ENCODE measurements at regions of chr14 and their contacts with region 1.

Region 1: GRCh38 chr14:63388763-63389431 is 70.2 kb upstream of the GPHB5 start:
- DNase-seq: peak; percentile 88
- H3K4me3 Mint-ChIP-seq: no peak overlapping the region
- H3K27ac Mint-ChIP-seq: no peak overlapping the region
- H3K4me1 Mint-ChIP-seq: peaks cover 7% of the 10 kb centered on the region
- H3K27me3 Mint-ChIP-seq: no peaks in the 10 kb centered on the region

Region 2: GRCh38 chr14:63342371-63342770 is 46.5 kb before region 1 on chr14:
- intact Hi-C with region 1: no loop called
- DNase-seq: no peak
- H3K4me3 Mint-ChIP-seq: no peak overlapping the region
- H3K27ac Mint-ChIP-seq: no peak overlapping the region
- H3K4me1 Mint-ChIP-seq: no peaks in the 10 kb centered on the region
- H3K27me3 Mint-ChIP-seq: peaks cover 35% of the 10 kb centered on the region

Region 3: GRCh38 chr14:63632932-63633514 is 244.1 kb after region 1 on chr14:
- intact Hi-C with region 1: loop called (anchors 2 kb)
- DNase-seq: peak; percentile 62
- H3K4me3 Mint-ChIP-seq: no peak overlapping the region
- H3K27ac Mint-ChIP-seq: no peak overlapping the region
- H3K4me1 Mint-ChIP-seq: peaks cover 18% of the 10 kb centered on the region
- H3K27me3 Mint-ChIP-seq: no peaks in the 10 kb centered on the region

Region 4: DNA sequence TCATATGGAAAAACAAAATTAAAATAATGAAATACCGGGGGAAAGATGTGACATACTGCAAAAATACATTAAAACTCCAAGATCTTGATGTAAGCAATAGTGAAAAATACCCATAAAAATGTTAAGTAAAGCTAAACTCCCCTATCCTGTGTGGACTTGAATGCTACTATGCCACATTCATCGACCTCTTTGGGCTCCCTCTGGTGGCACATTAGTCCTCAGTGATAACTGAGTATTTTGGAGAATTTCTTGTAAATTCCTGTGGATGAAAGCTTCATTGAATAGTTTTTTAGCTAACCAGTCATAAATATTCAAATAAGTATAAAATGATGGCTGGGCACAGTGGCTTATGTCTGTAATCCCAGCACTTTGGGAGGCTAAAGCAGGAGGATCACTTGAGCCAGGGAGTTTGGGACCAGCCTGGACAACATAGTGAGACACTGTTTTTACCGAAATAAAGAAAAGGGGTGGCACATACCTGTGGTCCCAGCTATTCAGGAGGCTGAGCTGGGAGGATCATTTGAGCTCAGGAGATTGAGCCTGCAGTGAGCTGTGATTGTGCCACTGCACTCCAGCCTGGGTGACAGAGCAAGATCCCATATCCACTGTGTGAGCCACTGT is 381.4 kb after region 1 on chr14:
- intact Hi-C with region 1: loop called (anchors 1 kb)
- DNase-seq: peak; percentile 87
- H3K4me3 Mint-ChIP-seq: no peak overlapping the region
- H3K27ac Mint-ChIP-seq: no peak overlapping the region
- H3K4me1 Mint-ChIP-seq: peaks cover 9% of the 10 kb centered on the region
- H3K27me3 Mint-ChIP-seq: no peaks in the 10 kb centered on the region